Activated T-helper 2 cell treated with anti-CD3 and anti-CD28 coated beads, Interferon-gamma antibody, Interleukin-2, Interleukin-4, amounts not matched to agents 10 μg/mL and 5 μg/mL and 100 μg/mL, durations not matched to agents 14 hours and 24 hours and 36 hours (primary cell): ENCODE measurements at regions of chrX and their contacts with region 1.

Region 1: GRCh38 chrX:1323315-1323714 is 13.3 kb upstream of the IL3RA start:
- DNase-seq: peak; percentile 60
- H3K4me3 Mint-ChIP-seq: no peak overlapping the region
- H3K27ac Mint-ChIP-seq: peak overlapping the region; percentile 70
- H3K4me1 Mint-ChIP-seq: peaks cover 20% of the 10 kb centered on the region
- H3K27me3 Mint-ChIP-seq: peaks cover 2% of the 10 kb centered on the region

Region 2: DNA sequence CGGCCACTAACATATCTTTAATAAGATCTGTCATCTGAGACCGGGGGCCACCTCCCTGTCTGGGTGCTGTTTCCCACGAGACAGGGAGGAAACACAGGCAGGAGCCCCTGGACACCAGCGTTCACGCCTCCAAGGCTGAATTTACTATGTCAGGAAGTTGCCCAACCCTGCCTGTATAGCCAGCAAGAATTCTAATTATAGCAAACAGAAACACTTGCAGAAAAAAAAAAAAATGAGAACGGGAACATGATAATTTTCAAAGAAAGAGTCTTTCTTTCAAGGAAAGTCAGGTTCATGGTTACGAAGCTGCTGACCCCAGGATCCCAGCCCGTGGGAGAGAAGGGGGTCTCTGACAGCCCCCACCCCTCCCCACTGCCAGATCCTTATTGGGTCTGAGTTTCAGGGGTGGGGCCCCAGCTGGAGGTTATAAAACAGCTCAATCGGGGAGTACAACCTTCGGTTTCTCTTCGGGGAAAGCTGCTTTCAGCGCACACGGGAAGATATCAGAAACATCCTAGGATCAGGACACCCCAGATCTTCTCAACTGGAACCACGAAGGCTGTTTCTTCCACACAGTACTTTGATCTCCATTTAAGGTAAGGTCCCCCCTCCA is 13.1 kb after region 1 on chrX and contains the start of gene IL3RA:
- intact Hi-C with region 1: loop called (anchors 1 kb)
- DNase-seq: peak; percentile 48
- H3K4me3 Mint-ChIP-seq: peak within 1 kb of the TSS; percentile 85
- H3K27ac Mint-ChIP-seq: peak within 1 kb of the TSS; percentile 83
- H3K4me1 Mint-ChIP-seq: peaks cover 26% of the 10 kb centered on the region
- H3K27me3 Mint-ChIP-seq: no peaks in the 10 kb centered on the region
- total RNA-seq, gene IL3RA: 6.8 and 7.4 TPM in 2 replicates

Region 3: DNA sequence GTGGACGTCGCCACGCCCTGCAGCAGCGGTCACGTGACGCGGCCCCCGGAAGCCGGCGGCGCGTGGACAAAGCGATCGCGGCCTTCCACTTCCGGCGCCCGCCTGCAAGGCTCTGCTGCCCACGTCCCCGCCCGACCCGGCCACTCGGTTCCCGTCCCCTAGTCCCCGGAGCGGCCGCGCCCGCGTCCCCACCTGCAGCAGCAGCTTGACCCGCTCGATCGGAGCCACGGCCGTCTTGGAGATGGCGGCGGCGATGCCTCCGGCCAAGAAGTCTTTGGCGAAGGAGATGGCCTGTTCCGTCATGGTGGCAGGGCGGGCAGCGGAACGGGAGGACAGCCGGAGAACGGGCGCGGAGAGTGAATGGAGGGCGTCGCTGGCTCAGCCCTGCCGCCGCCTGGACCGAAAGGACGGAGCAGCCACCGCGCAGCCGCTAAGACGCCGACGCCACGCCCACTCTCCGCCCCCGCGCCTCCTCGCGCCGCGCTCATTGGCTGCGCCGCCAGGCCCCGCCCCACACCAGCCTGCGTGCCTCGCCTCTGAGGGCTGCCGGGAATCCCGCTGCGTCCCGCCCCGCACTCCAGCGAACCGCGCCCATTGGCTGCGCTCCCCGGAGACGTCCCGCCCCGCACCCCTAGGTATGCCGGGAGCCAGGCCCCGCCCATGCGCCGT is 68.5 kb after region 1 on chrX and contains the start of gene SLC25A6:
- intact Hi-C with region 1: loop called (anchors 2 kb)
- DNase-seq: peak; percentile 99
- H3K4me3 Mint-ChIP-seq: peak within 1 kb of the TSS; percentile 95
- H3K27ac Mint-ChIP-seq: peak within 1 kb of the TSS; percentile 95
- H3K4me1 Mint-ChIP-seq: peaks cover 26% of the 10 kb centered on the region
- H3K27me3 Mint-ChIP-seq: no peaks in the 10 kb centered on the region
- total RNA-seq, gene SLC25A6: 318 and 325 TPM in 2 replicates